Transverse colon (tissue), 4 donors: ENCODE measurements at regions of chr2 and their contacts with region 1.

Region 1: GRCh38 chr2:42844901-42845821 is 52.8 kb upstream of the HAAO start:
- DNase-seq: peak; percentile 31
- H3K4me3 ChIP-seq: no peak overlapping the region
- H3K27ac ChIP-seq: peak overlapping the region; percentile 68 to 82 (median 72)
- H3K4me1 ChIP-seq: peaks cover 10 to 28% (median 17%) of the 10 kb centered on the region in 4 donors
- H3K27me3 ChIP-seq: no peaks in the 10 kb centered on the region
- CTCF ChIP-seq: no peak
- EP300 ChIP-seq: no peak
- POLR2A ChIP-seq: no peak

Region 2: DNA sequence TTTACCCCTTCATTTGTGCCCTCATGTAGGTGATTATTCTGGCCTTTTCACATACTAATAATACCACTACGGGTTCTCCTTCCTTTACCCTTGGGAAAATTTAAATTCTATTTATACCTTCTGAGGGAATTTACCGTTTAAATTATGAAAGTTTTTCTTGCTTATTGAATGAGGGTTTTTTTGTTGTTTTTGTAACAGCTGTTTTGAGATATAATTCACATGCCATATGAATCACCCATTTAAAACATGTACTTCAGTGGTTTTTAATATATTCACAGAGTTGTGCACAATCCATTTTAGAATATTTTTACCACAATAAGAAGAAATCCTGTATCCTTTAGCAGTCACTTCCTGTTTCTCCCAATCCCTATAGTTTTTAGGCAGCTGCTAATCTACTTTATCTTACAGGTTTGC is 621.3 kb before region 1 on chr2:
- in situ Hi-C with region 1: no loop called
- intact Hi-C with region 1: no loop called
- DNase-seq: no peak
- H3K4me3 ChIP-seq: no peak overlapping the region
- H3K27ac ChIP-seq: peak overlapping the region in 3 of 4 donors; percentile 43 to 69 (median 45)
- H3K4me1 ChIP-seq: peaks cover 0 to 45% (median 28%) of the 10 kb centered on the region in 4 donors
- H3K27me3 ChIP-seq: no peaks in the 10 kb centered on the region
- CTCF ChIP-seq: no peak
- EP300 ChIP-seq: no peak
- POLR2A ChIP-seq: no peak

Region 3: GRCh38 chr2:43158259-43158880 is 313.2 kb after region 1 on chr2:
- in situ Hi-C with region 1: no loop called
- intact Hi-C with region 1: loop called (anchors 5 kb)
- DNase-seq: peak; percentile 85
- H3K4me3 ChIP-seq: no peak overlapping the region
- H3K27ac ChIP-seq: peak overlapping the region; percentile 93 to 95 (median 94)
- H3K4me1 ChIP-seq: peaks cover 26 to 73% (median 59%) of the 10 kb centered on the region in 4 donors
- H3K27me3 ChIP-seq: no peaks in the 10 kb centered on the region
- CTCF ChIP-seq: no peak
- EP300 ChIP-seq: no peak
- POLR2A ChIP-seq: no peak